ENCODE measurements at regions of chr11 and their contacts with region 1.

Region 1: GRCh38 chr11:119474682-119475596 is 52.0 kb upstream of the THY1 start:
- DNase-seq: peak; percentile 34 to 64
- ATAC-seq: peak; percentile 67 to 81 (median 77)
- H3K4me3 ChIP-seq: no peak overlapping the region
- H3K27ac ChIP-seq: no peak overlapping the region
- H3K4me1 ChIP-seq: peaks cover 0 to 5% (median 0%) of the 10 kb centered on the region in 9 donors
- H3K27me3 ChIP-seq: no peaks in the 10 kb centered on the region
- CTCF ChIP-seq: peak; percentile 70 to 95 (median 89)

Region 2: DNA sequence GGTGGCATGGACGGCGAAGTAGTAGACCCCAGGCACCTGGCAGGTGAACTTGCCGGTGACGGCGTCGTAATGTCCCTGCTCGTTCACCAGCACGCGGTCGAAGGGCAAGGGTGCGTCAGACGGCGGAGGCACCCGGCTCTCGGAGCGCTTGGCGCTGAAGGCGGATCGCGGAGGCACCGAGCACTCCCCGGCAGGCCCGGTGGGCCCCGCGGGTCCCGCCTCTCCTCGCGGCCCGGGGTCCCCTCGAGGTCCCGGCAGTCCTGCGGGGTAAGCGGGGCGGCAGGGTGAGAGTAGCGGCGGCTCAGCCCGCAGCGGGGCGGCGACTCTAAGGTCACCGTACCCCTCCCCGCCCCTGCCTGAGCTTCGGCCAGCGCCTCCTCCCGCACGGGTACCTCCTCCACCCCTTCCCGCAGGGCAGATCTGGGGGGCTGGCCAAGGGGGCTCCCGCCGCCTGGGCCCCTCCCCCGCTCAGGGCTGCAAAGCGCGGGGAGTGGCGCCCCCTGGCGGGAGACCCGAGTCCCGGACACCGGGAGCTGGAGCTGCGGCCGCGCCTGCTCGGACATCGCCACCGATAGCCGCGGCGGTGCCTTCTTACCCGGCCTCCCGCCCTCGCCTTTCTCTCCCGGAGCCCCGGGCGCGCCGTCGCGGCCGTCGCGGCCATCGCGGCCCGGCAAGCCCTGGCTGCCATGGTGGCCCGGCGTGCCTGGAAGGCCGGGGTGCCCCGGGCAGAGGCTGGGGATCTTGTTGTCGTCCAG is 135.2 kb before region 1 on chr11:
- intact Hi-C with region 1: loop called in 1 of 10 experiments (anchors 10 kb)
- DNase-seq: peak; percentile 77 to 85
- ATAC-seq: peak; percentile 52 to 80 (median 65)
- H3K4me3 ChIP-seq: peak overlapping the region; percentile 61 to 91 (median 78)
- H3K27ac ChIP-seq: peak overlapping the region; percentile 85 to 100 (median 97)
- H3K4me1 ChIP-seq: peaks cover 22 to 64% (median 56%) of the 10 kb centered on the region in 9 donors
- H3K27me3 ChIP-seq: peaks cover 0 to 38% (median 0%) of the 10 kb centered on the region in 7 donors
- CTCF ChIP-seq: peak; percentile 93 to 98 (median 96)

Region 3: DNA sequence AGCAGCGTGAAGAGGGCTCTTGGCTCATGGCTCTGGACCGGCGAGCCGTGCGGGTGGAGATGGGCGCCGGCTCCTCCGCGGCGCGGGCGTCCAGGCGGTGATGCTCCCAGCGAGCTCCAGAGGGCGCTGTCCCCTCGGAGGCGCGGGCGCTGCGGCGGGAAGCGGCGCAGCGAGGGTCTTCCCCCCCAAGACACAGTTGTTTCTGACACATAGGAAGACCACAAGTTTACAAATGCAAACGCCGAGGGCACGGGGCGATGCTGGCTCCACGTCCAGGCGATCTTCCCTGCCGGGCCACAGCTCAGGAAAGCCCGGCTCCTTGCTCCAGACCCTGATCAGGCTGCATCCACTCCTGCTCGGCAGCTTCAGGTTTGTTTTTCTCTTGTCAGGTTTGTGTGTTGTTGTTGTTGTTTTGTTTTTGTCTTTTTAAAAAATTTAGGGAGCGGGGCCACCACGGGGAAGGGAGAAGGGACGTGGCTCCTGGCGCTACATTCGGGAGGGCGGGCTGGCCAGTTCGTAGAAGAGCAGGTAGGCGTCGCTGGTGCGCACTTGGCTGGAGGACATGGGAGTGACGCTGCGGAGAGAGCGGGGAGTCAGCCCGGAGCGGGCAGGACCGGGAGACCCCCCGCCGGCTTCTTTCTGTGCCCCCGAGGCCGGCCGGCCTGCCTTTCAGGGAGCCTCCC is 118.4 kb before region 1 on chr11:
- intact Hi-C with region 1: loop called in 8 of 10 experiments (anchors 1 to 10 kb)
- DNase-seq: peak; percentile 81 to 84
- ATAC-seq: peak; percentile 66 to 86 (median 76)
- H3K4me3 ChIP-seq: peak overlapping the region; percentile 36 to 63 (median 58)
- H3K27ac ChIP-seq: peak overlapping the region; percentile 27 to 98 (median 66)
- H3K4me1 ChIP-seq: peaks cover 19 to 73% (median 42%) of the 10 kb centered on the region in 9 donors
- H3K27me3 ChIP-seq: peaks cover 0 to 7% (median 0%) of the 10 kb centered on the region in 7 donors
- CTCF ChIP-seq: peak; percentile 70 to 93 (median 86)

Region 4: DNA sequence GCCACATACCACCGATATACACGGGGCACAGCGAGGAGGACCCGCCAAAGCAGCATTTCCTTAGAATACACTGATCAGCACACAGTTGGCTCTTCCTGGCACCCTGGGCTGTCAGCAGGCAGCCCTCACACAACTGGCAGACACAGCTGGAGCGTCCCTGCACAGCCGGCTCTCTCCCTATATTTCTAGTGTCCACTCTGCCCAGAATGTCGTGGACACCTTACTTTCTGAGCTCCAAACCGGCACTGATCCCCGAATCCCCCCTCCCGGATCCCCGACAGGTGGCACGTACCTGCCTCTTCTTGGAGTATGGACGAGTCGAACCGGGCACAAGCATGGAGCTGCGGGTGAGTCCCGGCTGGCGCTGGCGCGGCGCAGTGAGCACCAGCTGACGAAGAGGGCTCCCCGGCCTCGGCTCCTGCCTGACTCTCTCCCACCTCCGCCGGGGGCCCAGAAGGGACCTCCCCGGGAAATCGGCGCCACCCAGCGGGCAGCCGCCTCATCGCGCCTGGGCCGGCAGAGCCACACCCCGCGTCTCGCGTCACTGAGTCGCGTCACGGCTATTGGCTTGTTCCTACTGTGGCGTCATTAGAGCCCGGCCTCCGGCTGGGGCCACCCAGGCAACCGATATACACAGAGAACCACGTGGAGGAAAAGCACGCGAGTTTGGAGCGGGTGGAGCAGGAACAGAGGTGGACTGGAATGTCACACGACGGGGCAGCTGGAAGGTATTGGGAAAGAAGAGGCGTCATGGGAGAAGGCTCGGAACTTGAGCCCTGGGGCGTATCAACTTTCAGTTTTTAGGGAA is 93.6 kb before region 1 on chr11 and contains the start of gene USP2:
- intact Hi-C with region 1: loop called in 6 of 10 experiments (anchors 5 to 10 kb)
- DNase-seq: peak; percentile 95 to 97
- ATAC-seq: peak; percentile 87 to 98 (median 94)
- H3K4me3 ChIP-seq: peak within 1 kb of the TSS; percentile 5 to 66 (median 52)
- H3K27ac ChIP-seq: peak within 1 kb of the TSS in 9 of 10 donors; percentile 62 to 83 (median 73)
- H3K4me1 ChIP-seq: peaks cover 9 to 40% (median 28%) of the 10 kb centered on the region in 9 donors
- H3K27me3 ChIP-seq: peaks cover 0 to 4% (median 0%) of the 10 kb centered on the region in 7 donors
- CTCF ChIP-seq: peak; percentile 78 to 99 (median 94)
- total RNA-seq, gene USP2: 87.0 to 183 (median 136) TPM

Region 5: GRCh38 chr11:119389611-119390254 is 85.2 kb before region 1 on chr11:
- intact Hi-C with region 1: loop called in 6 of 10 experiments (anchors 5 to 10 kb)
- DNase-seq: no peak
- ATAC-seq: no peak
- H3K4me3 ChIP-seq: no peak overlapping the region
- H3K27ac ChIP-seq: no peak overlapping the region
- H3K4me1 ChIP-seq: no peaks in the 10 kb centered on the region
- H3K27me3 ChIP-seq: peaks cover 0 to 4% (median 0%) of the 10 kb centered on the region in 7 donors
- CTCF ChIP-seq: peak in 3 of 9 donors; percentile 10 to 30 (median 14)

Region 6: GRCh38 chr11:119421941-119422808 is 52.8 kb before region 1 on chr11:
- intact Hi-C with region 1: loop called in 1 of 10 experiments (anchors 5 kb)
- DNase-seq: peak in 1 of 2 donors; percentile 30
- ATAC-seq: peak in 7 of 8 donors; percentile 26 to 73 (median 50)
- H3K4me3 ChIP-seq: peak overlapping the region; percentile 4 to 64 (median 60)
- H3K27ac ChIP-seq: peak overlapping the region in 6 of 10 donors; percentile 22 to 75 (median 55)
- H3K4me1 ChIP-seq: peaks cover 7 to 33% (median 18%) of the 10 kb centered on the region in 9 donors
- H3K27me3 ChIP-seq: peaks cover 0 to 54% (median 48%) of the 10 kb centered on the region in 7 donors
- CTCF ChIP-seq: no peak

Measured in heart right ventricle (tissue), 16 donors.